ENCODE measurements at regions of chr2 and their contacts with region 1.

Region 1: DNA sequence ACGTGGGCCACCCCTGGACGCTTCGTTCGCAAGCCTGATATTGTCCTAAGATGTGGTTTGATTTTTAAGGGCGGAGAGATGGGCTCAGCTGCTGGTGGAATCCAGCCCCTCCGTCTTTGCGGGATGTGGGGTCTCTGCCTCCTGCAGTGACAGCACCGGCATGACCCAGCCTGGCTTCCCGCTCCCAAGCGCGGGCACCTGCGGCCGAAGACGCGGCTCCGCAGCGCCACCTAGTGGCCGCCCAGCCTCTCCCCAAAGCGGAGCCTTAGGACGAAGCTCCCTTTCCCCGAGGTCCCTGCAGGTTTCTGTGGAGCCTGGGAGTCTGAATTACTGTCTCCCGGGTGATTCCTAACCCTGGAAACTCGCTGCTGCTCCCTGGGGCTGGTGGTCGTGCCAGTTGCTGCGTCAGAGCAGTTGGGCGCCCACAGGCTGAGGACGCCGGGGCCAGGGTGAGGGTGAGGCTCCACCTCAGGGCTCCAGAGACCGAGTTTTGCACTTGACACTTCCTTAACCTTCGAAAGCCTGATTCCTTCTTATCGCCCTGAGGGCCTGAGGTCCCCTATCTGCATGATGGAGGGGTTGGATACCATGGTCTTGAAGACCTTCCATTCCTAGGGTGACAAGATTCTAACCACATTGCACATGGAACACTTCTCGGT is 137.5 kb downstream of the TPO start:
- DNase-seq: peak; percentile 31 to 57 (median 46)
- H3K4me3 ChIP-seq: no peak overlapping the region
- H3K4me3 Mint-ChIP-seq: peak overlapping the region in 1 of 8 donors; percentile 26
- H3K27ac ChIP-seq: no peak overlapping the region
- H3K27ac Mint-ChIP-seq: no peak overlapping the region
- H3K4me1 ChIP-seq: peaks cover 11% of the 10 kb centered on the region
- H3K4me1 Mint-ChIP-seq: peaks cover 3 to 10% (median 7%) of the 10 kb centered on the region in 4 donors
- H3K27me3 ChIP-seq: no peaks in the 10 kb centered on the region
- H3K27me3 Mint-ChIP-seq: peaks cover 0 to 5% of the 10 kb centered on the region in 2 donors

Region 2: DNA sequence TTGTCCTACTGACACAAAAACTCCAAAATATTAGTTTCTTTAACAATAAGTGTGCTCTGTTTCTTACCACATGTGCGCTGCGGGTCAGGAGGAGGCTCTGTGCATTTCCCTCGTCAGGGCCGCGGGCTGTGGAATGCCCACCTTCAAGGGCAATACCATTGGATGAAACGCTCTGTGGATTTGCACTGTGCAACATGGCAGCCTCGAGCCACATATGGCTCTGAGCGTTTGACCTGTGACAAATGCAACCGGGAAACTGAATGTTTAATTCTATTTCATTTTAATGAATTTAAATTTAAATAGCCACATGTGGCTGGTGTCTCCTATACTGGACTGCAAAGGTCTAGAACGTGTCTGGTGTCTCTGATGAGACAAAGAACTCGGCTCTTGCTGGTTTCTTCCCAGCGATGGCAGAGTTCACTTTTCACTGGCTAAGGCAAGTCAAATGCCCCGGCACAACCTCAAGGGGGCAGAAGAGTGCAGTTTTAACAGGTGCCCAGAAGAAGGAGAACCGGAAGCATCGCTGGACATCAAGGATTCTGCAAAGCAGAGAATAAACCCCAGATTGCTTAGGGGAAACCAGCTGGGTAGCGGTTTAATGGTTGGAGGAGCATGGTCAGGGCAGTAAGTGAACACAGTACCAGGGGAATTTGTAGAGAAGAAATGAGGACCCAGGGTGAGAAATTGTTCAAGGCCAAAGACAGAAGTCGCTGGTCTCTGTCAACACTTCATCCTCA is 836.6 kb before region 1 on chr2:
- CTCF ChIA-PET with region 1: interaction called, 5 read pairs
- POLR2A ChIA-PET with region 1: no interaction called
- intact Hi-C with region 1: loop called (anchors 10 kb)
- DNase-seq: peak in 2 of 5 donors; percentile 4 to 29
- H3K4me3 ChIP-seq: no peak overlapping the region
- H3K4me3 Mint-ChIP-seq: no peak overlapping the region
- H3K27ac ChIP-seq: no peak overlapping the region
- H3K27ac Mint-ChIP-seq: no peak overlapping the region
- H3K4me1 ChIP-seq: no peaks in the 10 kb centered on the region
- H3K4me1 Mint-ChIP-seq: no peaks in the 10 kb centered on the region
- H3K27me3 ChIP-seq: no peaks in the 10 kb centered on the region
- H3K27me3 Mint-ChIP-seq: peaks cover 14 to 17% of the 10 kb centered on the region in 2 donors

Region 3: DNA sequence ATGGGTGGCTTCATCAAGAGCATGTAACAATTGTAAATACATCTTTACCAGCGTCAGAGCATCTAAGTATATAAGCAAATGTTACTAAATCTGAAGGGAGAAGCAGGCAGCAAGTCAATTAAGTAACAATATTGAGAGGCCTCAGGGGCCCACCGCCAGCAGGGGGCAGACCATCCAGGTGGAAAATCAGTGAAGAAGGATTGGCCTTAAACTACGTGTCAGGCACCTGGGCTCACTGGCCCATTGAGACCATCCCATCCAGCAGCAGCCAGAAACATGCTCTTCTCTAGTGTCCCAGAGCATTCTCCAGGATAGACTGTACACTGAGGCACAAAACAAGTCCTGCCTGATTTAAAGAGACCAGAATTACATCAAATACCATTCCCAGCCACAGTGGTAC is 696.3 kb before region 1 on chr2:
- CTCF ChIA-PET with region 1: interaction called, 14 read pairs
- POLR2A ChIA-PET with region 1: no interaction called
- intact Hi-C with region 1: loop called (anchors 1 kb)
- DNase-seq: peak in 2 of 5 donors; percentile 14 to 42
- H3K4me3 ChIP-seq: no peak overlapping the region
- H3K4me3 Mint-ChIP-seq: peak overlapping the region in 5 of 8 donors; percentile 32 to 71 (median 52)
- H3K27ac ChIP-seq: no peak overlapping the region
- H3K27ac Mint-ChIP-seq: peak overlapping the region in 3 of 7 donors; percentile 33 to 91 (median 43)
- H3K4me1 ChIP-seq: peaks cover 17% of the 10 kb centered on the region
- H3K4me1 Mint-ChIP-seq: peaks cover 9 to 31% (median 21%) of the 10 kb centered on the region in 4 donors
- H3K27me3 ChIP-seq: no peaks in the 10 kb centered on the region
- H3K27me3 Mint-ChIP-seq: no peaks in the 10 kb centered on the region

Region 4: GRCh38 chr2:950080-950966 is 600.5 kb before region 1 on chr2 and contains the start of gene SNTG2:
- CTCF ChIA-PET with region 1: interaction called, 4 read pairs
- POLR2A ChIA-PET with region 1: no interaction called
- intact Hi-C with region 1: loop called (anchors 10 kb)
- DNase-seq: peak; percentile 19 to 53 (median 41)
- H3K4me3 ChIP-seq: peak within 1 kb of the TSS in 1 of 2 donors; percentile 9
- H3K4me3 Mint-ChIP-seq: peak within 1 kb of the TSS; percentile 65 to 90 (median 82)
- H3K27ac ChIP-seq: no peak within 1 kb of the TSS
- H3K27ac Mint-ChIP-seq: peak within 1 kb of the TSS in 1 of 7 donors; percentile 35
- H3K4me1 ChIP-seq: peaks cover 15% of the 10 kb centered on the region
- H3K4me1 Mint-ChIP-seq: peaks cover 15 to 37% (median 19%) of the 10 kb centered on the region in 4 donors
- H3K27me3 ChIP-seq: peaks cover 6% of the 10 kb centered on the region
- H3K27me3 Mint-ChIP-seq: peaks cover 11 to 29% of the 10 kb centered on the region in 2 donors
- total RNA-seq, gene SNTG2: 0.96 to 1.3 TPM

Region 5: DNA sequence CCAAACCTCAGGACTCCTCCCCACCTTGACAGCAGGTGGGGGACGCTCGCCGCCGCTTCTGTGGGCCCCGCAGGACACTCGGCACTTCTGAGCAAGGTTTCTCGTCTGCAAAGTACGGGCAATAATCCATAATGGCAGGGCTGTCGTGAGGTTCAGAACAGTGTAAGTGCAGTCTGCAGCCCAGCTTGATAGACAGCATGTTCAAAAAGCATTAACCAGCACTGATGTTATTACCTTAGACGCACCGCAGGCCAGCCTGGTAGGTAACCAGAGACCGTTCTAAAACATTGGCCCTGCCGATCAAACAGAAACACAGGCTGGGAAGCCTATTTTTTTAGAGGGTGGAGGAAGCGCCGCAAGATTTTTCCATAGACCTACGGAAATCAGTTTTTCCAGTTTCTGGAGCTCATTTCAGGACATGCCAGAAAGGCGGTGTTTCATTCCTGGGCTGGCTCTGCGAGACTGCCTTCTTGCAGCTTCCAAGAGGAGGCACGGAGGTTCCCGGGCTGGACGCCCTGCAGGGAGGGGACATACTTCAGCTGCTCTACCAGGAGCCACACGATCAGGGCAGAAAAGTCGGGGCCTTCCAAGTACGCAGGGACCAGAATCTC is 11.1 kb after region 1 on chr2:
- CTCF ChIA-PET with region 1: interaction called, 27 read pairs
- POLR2A ChIA-PET with region 1: no interaction called
- intact Hi-C with region 1: no loop called
- DNase-seq: no peak
- H3K4me3 ChIP-seq: no peak overlapping the region
- H3K4me3 Mint-ChIP-seq: no peak overlapping the region
- H3K27ac ChIP-seq: no peak overlapping the region
- H3K27ac Mint-ChIP-seq: no peak overlapping the region
- H3K4me1 ChIP-seq: peaks cover 21% of the 10 kb centered on the region
- H3K4me1 Mint-ChIP-seq: peaks cover 8 to 26% (median 21%) of the 10 kb centered on the region in 4 donors
- H3K27me3 ChIP-seq: no peaks in the 10 kb centered on the region
- H3K27me3 Mint-ChIP-seq: no peaks in the 10 kb centered on the region

Region 6: DNA sequence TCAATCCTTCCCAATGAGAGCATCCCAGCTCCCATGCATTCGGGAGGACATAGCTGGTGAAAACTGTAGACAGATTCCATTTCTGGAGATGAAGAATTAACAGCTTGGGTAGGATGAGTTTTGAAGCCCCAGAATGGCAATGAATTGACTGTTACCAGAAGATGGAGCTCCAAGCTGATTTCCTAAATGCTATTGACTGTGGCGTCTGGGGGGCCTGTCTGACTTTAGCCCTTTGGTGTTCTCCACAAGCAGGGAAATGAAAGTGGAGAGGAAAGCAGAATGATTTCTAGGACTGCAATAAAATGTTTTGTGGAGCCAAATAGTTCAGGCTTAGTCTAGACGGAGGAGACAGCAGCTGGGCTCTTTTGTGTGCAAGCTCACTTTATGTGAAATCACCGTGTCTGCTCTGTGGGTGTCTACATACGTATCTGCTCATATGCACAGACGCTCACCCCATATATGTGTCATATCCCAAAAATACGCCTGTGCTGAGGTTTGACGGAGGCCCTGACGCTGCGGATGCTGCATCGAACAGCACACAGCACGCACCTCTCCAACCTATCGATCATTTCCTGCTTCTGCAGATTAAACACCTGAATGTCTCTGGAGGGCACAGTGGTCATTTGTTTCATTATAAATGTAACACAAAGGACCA is 359.9 kb after region 1 on chr2:
- CTCF ChIA-PET with region 1: no interaction called
- POLR2A ChIA-PET with region 1: no interaction called
- intact Hi-C with region 1: no loop called
- DNase-seq: no peak
- H3K4me3 ChIP-seq: no peak overlapping the region
- H3K4me3 Mint-ChIP-seq: no peak overlapping the region
- H3K27ac ChIP-seq: no peak overlapping the region
- H3K27ac Mint-ChIP-seq: no peak overlapping the region
- H3K4me1 ChIP-seq: no peaks in the 10 kb centered on the region
- H3K4me1 Mint-ChIP-seq: no peaks in the 10 kb centered on the region
- H3K27me3 ChIP-seq: no peaks in the 10 kb centered on the region
- H3K27me3 Mint-ChIP-seq: peaks cover 0 to 5% of the 10 kb centered on the region in 2 donors

Region 7: DNA sequence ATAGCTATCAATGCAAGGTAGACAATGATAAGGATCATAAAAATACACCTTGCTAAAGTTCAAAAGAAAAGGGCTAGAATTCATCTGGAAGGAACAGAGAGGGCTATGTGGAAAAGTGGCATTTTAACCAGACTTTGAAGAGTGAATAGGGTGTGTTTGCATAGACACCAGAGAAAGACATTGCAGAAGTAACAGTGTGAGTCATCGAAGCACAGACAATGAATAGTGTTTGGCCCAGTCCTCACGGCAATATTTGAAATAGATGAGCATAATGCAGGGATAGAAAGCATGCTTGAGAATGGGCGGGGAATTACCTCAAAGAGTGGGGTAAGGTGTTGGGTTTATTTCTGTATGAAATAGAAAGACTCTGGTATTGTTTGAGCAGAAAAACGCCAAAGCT is 756.1 kb after region 1 on chr2:
- CTCF ChIA-PET with region 1: no interaction called
- POLR2A ChIA-PET with region 1: no interaction called
- intact Hi-C with region 1: no loop called
- DNase-seq: no peak
- H3K4me3 ChIP-seq: no peak overlapping the region
- H3K4me3 Mint-ChIP-seq: no peak overlapping the region
- H3K27ac ChIP-seq: no peak overlapping the region
- H3K27ac Mint-ChIP-seq: no peak overlapping the region
- H3K4me1 ChIP-seq: no peaks in the 10 kb centered on the region
- H3K4me1 Mint-ChIP-seq: no peaks in the 10 kb centered on the region
- H3K27me3 ChIP-seq: no peaks in the 10 kb centered on the region
- H3K27me3 Mint-ChIP-seq: peaks cover 0 to 4% of the 10 kb centered on the region in 2 donors

Measured in CD4-positive, alpha-beta memory T cell (primary cell).